ENCODE measurements at regions of chr2 and their contacts with region 1.

Region 1: GRCh38 chr2:204325468-204325867 is 219.8 kb upstream of the PARD3B start:
- DNase-seq: peak; percentile 85
- H3K4me3 ChIP-seq: no peak overlapping the region
- H3K27ac ChIP-seq: no peak overlapping the region
- H3K4me1 ChIP-seq: peaks cover 22% of the 10 kb centered on the region
- H3K27me3 ChIP-seq: no peaks in the 10 kb centered on the region
- CTCF ChIP-seq: peak; percentile 86

Region 2: DNA sequence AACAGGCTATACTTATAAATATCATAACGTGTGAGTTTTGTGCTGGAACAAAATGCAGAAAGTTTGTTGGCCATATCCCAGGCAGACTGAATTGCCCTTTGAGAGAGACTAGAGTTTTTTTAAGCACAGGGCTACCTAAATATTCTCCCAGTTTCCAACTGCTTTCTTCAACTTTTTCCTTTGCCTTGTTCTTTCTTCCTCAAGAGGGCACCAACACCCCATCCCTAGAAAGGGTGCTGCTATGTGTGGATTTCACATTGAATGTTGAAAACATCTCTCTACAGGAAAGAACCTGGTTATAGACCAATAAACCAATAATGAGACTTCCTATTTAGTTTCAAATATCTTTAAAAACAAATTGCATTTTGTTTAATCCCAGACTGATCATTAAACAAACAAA is 301.0 kb before region 1 on chr2:
- CTCF ChIA-PET with region 1: no interaction called
- POLR2A ChIA-PET with region 1: no interaction called
- intact Hi-C with region 1: loop called (anchors 10 kb)
- DNase-seq: peak; percentile 76
- H3K4me3 ChIP-seq: no peak overlapping the region
- H3K27ac ChIP-seq: no peak overlapping the region
- H3K4me1 ChIP-seq: peaks cover 21% of the 10 kb centered on the region
- H3K27me3 ChIP-seq: no peaks in the 10 kb centered on the region
- CTCF ChIP-seq: peak; percentile 76

Region 3: GRCh38 chr2:204145263-204145751 is 180.2 kb before region 1 on chr2:
- CTCF ChIA-PET with region 1: interaction called, 3 read pairs
- POLR2A ChIA-PET with region 1: no interaction called
- intact Hi-C with region 1: loop called (anchors 2 kb)
- DNase-seq: peak; percentile 89
- H3K4me3 ChIP-seq: peak overlapping the region; percentile 35
- H3K27ac ChIP-seq: peak overlapping the region; percentile 55
- H3K4me1 ChIP-seq: peaks cover 3% of the 10 kb centered on the region
- H3K27me3 ChIP-seq: no peaks in the 10 kb centered on the region
- CTCF ChIP-seq: peak; percentile 98

Region 4: DNA sequence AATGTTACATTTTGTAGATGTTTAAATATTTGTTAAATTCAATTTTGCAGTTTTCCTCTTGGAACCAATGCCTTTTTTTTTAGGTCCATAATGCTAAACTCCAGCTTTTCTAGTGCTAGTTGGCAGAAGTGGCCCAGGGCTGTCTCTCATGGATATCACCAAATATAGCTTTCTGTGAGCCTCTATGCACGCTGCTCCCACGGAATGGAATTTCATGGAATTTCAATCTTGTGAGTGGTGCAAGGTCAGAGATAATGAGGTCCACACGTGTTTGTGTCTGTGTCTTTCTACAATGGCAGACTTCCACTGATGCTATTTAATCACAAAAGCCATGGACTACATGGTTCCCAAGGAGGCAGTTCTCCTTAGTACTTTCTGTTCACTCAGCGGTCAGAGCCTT is 28.4 kb after region 1 on chr2:
- CTCF ChIA-PET with region 1: no interaction called
- POLR2A ChIA-PET with region 1: no interaction called
- intact Hi-C with region 1: no loop called
- DNase-seq: no peak
- H3K4me3 ChIP-seq: no peak overlapping the region
- H3K27ac ChIP-seq: no peak overlapping the region
- H3K4me1 ChIP-seq: no peaks in the 10 kb centered on the region
- H3K27me3 ChIP-seq: no peaks in the 10 kb centered on the region
- CTCF ChIP-seq: no peak

Region 5: GRCh38 chr2:204545023-204545860 is 219.8 kb after region 1 on chr2 and contains the start of gene PARD3B:
- CTCF ChIA-PET with region 1: no interaction called
- POLR2A ChIA-PET with region 1: no interaction called
- intact Hi-C with region 1: loop called (anchors 10 kb)
- DNase-seq: peak; percentile 77
- H3K4me3 ChIP-seq: peak within 1 kb of the TSS; percentile 84
- H3K27ac ChIP-seq: peak within 1 kb of the TSS; percentile 83
- H3K4me1 ChIP-seq: peaks cover 7% of the 10 kb centered on the region
- H3K27me3 ChIP-seq: no peaks in the 10 kb centered on the region
- CTCF ChIP-seq: no peak
- total RNA-seq, gene PARD3B: 7.6 and 7.7 TPM in 2 replicates

Region 6: DNA sequence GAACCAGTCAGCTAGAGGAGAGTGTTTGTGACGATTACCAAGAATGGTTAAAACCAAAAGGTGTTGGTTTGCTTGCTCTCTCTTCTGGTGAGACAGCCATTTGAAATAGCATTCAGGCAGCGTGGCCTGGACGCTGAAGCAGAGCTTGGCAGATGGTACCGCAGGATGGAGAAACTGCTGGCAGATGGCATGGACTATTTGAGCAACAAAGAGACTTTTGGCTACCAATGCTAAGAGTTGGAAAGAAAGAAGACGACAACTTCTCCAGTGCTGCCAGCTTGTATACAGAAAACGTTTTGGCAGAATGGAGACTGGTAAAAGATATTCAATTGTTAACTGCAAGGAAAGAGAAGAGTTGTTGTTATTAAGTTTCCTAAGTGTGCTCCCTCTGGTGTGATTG is 534.8 kb after region 1 on chr2:
- CTCF ChIA-PET with region 1: no interaction called
- POLR2A ChIA-PET with region 1: no interaction called
- intact Hi-C with region 1: loop called (anchors 10 kb)
- DNase-seq: no peak
- H3K4me3 ChIP-seq: no peak overlapping the region
- H3K27ac ChIP-seq: no peak overlapping the region
- H3K4me1 ChIP-seq: no peaks in the 10 kb centered on the region
- H3K27me3 ChIP-seq: no peaks in the 10 kb centered on the region
- CTCF ChIP-seq: no peak

Region 7: DNA sequence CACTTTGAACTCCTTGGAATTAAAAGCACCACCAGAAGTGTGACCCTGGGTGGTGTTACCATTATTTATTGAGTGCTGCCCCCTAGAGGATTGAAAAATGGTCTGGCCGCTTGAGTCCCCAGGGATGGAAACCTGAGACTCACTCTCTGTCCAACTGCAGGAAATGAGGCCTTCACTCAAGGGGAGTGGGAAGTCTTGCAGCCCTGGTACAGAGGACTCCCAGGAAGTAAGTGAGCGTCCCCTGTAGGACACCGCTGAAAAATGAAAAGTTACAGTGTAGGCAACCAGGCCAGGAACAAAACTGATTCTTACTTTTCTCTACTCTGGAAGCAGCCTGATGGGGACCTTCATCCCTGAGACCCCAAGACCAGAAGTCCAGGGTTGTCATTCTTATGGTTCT is 1354.6 kb after region 1 on chr2:
- CTCF ChIA-PET with region 1: no interaction called
- POLR2A ChIA-PET with region 1: no interaction called
- intact Hi-C with region 1: loop called (anchors 5 kb)
- DNase-seq: peak; percentile 97
- H3K4me3 ChIP-seq: no peak overlapping the region
- H3K27ac ChIP-seq: no peak overlapping the region
- H3K4me1 ChIP-seq: peaks cover 13% of the 10 kb centered on the region
- H3K27me3 ChIP-seq: peaks cover 27% of the 10 kb centered on the region
- CTCF ChIP-seq: peak; percentile 91

Region 8: DNA sequence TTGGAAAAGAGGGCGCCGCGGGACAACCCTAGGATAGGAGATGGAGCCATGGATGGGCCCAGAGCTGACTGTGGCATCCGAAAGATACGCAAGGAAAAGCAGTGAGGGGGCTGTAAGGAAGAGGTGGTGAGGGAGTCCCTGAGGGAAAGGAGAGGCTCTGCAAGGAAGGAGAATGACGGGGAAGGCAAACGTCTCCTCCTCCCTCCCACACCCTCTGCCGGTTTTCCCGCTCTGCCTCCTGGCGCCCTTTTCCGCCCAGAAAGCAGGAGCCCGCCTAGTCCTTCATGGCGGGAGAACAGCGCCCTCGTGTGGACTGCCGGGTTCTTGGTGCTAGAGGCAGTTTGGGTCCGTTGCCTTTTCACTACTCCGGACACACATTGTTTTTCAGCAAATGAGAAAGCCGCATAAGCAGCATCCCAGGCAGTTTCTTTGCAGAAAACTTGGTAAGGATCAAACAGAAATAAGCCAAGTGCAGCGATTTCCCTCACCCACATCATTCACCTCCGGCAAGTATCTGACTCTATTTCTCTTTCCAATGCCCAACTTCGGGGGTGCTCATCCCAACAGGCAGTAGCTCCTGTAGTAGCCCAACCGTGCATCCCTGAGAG is 1560.1 kb after region 1 on chr2:
- CTCF ChIA-PET with region 1: no interaction called
- POLR2A ChIA-PET with region 1: no interaction called
- intact Hi-C with region 1: loop called (anchors 10 kb)
- DNase-seq: peak; percentile 91
- H3K4me3 ChIP-seq: no peak overlapping the region
- H3K27ac ChIP-seq: no peak overlapping the region
- H3K4me1 ChIP-seq: no peaks in the 10 kb centered on the region
- H3K27me3 ChIP-seq: no peaks in the 10 kb centered on the region
- CTCF ChIP-seq: peak; percentile 94